ENCODE measurements at regions of chr14 and their contacts with region 1.

Region 1: DNA sequence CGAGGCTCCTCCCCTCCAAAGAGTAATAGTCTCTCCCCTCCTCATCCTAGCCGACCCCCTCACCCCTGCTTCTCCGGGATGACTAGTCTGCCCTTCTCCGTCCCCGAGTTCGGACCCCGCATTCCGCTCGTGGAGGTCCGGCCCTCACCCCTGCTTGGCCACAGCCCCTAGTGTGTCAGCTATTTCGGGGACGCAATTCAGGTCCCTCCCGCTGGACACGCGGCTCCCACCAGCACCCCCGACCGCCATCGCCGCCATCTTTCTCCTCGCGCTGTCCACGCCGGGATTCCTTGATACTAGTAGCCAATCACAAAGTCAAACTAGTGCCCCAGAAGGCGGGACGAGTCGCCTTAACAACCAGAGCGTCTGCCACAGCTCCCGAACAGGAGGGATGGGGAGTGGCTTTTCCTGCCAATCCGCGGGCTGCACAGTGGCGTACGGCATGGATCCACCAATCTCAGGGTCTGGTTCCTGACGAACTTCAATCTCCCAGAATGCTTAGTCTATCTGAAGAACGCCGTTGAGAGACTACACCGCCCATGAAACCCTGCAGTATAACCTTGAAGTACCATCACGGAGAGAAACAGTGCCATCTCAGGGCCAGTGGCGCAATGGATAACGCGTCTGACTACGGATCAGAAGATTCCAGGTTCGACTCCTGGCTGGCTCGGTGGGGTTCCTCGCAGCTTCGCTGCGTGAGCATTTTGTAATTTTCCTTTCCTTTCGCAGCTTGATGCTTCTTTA is at the start of gene PRMT5:
- DNase-seq: peak; percentile 99
- H3K4me3 Mint-ChIP-seq: no peak within 1 kb of the TSS
- H3K27ac Mint-ChIP-seq: no peak within 1 kb of the TSS
- H3K4me1 Mint-ChIP-seq: peaks cover 26% of the 10 kb centered on the region
- H3K27me3 Mint-ChIP-seq: no peaks in the 10 kb centered on the region

Region 2: DNA sequence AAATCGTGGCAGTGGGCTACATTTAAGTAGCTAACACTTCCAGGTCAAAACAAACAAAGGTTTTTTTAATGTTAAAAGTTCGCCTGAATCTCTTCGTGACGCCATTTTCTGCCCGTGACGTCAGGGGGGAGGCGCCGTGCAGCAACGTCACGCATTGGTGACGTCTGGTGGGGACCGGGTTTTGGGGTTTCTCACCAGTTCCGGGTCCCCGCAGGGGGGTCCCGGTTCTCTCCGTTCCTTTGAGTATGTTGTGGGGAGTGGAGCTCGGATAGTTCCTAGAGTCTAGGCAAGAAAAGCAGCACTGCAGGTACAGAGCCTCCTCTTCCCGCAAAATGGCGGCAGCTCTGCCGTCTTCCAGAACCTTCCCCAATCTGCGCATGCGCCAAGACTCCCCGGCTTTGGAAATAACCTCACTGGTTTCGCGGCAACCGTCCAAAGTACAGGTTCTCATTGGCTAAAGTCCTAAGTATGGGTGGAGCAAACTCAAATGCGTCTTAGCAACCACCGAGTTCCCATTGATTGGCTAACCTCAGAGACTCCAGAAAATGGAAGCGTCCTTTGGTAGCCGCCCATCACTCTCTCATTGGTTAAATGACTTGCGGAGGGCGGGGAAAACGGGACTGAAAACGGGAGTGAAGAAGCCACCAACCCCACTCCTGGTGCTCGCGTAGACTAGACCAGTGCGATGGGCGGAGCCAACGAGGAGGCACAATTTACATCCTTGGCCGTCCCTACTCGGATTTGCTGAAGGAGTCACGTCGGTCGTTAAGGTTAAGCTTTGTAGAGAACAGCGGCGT is 10.3 kb before region 1 on chr14 and contains the start of gene RBM23:
- CTCF ChIA-PET with region 1: interaction called, 24 read pairs
- DNase-seq: peak; percentile 100
- H3K4me3 Mint-ChIP-seq: peak within 1 kb of the TSS; percentile 99
- H3K27ac Mint-ChIP-seq: peak within 1 kb of the TSS; percentile 100
- H3K4me1 Mint-ChIP-seq: peaks cover 45% of the 10 kb centered on the region
- H3K27me3 Mint-ChIP-seq: peaks cover 6% of the 10 kb centered on the region

Region 3: GRCh38 chr14:22955702-22956569 is 26.7 kb after region 1 on chr14:
- CTCF ChIA-PET with region 1: interaction called, 24 read pairs
- DNase-seq: no peak
- H3K4me3 Mint-ChIP-seq: peak overlapping the region; percentile 91
- H3K27ac Mint-ChIP-seq: peak overlapping the region; percentile 92
- H3K4me1 Mint-ChIP-seq: peaks cover 30% of the 10 kb centered on the region
- H3K27me3 Mint-ChIP-seq: peaks cover 4% of the 10 kb centered on the region

Measured in activated naive CD4-positive, alpha-beta T cell treated with anti-CD3 and anti-CD28 coated beads, Interleukin-2, amount 10 ng/mL, durations not matched to agents 7 days and 5 days (primary cell).